Esophagus squamous epithelium (tissue), 5 donors: ENCODE measurements at regions of chr16 and their contacts with region 1.

Region 1: GRCh38 chr16:81623363-81624102 is 155.6 kb upstream of the PLCG2 start:
- DNase-seq: no peak
- H3K4me3 ChIP-seq: no peak overlapping the region
- H3K27ac ChIP-seq: peak overlapping the region; percentile 35 to 90 (median 82)
- H3K4me1 ChIP-seq: peaks cover 40 to 80% (median 52%) of the 10 kb centered on the region in 3 donors
- H3K27me3 ChIP-seq: no peaks in the 10 kb centered on the region
- CTCF ChIP-seq: peak in 5 of 6 experiments; percentile 56 to 78 (median 76)
- POLR2A ChIP-seq: no peak

Region 2: GRCh38 chr16:81723098-81723723 is 99.7 kb after region 1 on chr16:
- intact Hi-C with region 1: loop called (anchors 5 kb)
- DNase-seq: no peak
- H3K4me3 ChIP-seq: no peak overlapping the region
- H3K27ac ChIP-seq: no peak overlapping the region
- H3K4me1 ChIP-seq: peaks cover 9 to 38% (median 11%) of the 10 kb centered on the region in 3 donors
- H3K27me3 ChIP-seq: no peaks in the 10 kb centered on the region
- CTCF ChIP-seq: peak; percentile 62 to 85 (median 75)
- POLR2A ChIP-seq: no peak